Esophagus muscularis mucosa (tissue), 4 donors: ENCODE measurements at regions of chr10 and their contacts with region 1.

Region 1: DNA sequence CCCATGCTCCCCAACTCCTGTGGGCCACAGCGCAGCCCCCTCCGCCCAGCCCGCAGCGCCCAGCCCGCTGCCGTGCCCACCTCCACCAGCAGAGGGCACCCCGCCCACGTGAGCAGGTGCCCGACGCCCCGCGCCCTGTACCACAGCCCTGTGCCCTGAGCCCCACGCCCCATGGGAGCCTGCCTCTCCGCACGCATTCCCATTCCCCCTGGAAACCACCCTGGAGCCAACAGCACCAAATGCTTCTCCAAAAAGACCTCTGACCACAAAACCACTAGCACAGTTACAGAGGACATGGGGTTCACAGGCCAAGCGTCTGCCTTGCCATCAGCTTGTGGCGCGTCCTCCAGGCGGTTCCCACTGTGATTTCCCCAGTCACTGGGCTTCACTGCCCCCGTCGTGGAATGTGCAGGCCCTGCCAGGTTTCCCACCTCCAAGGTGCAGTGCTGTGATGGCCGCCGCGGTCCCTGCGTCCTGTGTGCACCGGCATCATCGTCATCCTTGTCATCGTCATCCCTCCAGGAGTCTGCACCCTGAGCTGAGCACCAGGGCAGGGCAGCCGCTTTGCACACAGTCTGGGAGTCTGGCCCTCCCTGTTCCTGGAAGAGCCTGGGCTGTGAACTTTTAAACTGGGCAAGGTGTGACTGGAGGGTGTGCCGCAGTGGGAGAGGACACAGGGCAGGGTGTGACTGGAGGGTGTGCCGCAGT is 61.7 kb downstream of the PWWP2B start:
- DNase-seq: no peak
- H3K4me3 ChIP-seq: no peak overlapping the region
- H3K27ac ChIP-seq: peak overlapping the region in 1 of 4 donors; percentile 16
- H3K4me1 ChIP-seq: peaks cover 28 to 55% (median 50%) of the 10 kb centered on the region in 4 donors
- H3K27me3 ChIP-seq: peaks cover 0 to 19% (median 0%) of the 10 kb centered on the region in 4 donors
- CTCF ChIP-seq: peak in 2 of 3 experiments; percentile 97
- EP300 ChIP-seq: no peak
- POLR2A ChIP-seq: no peak

Region 2: GRCh38 chr10:132575356-132576201 is 116.8 kb after region 1 on chr10:
- intact Hi-C with region 1: loop called (anchors 5 kb)
- DNase-seq: no peak
- H3K4me3 ChIP-seq: peak overlapping the region; percentile 10 to 30 (median 20)
- H3K27ac ChIP-seq: peak overlapping the region; percentile 78 to 81 (median 80)
- H3K4me1 ChIP-seq: peaks cover 83 to 95% (median 90%) of the 10 kb centered on the region in 4 donors
- H3K27me3 ChIP-seq: no peaks in the 10 kb centered on the region
- CTCF ChIP-seq: no peak
- EP300 ChIP-seq: no peak
- POLR2A ChIP-seq: no peak